ENCODE measurements at regions of chr7 and their contacts with region 1.

Region 1: DNA sequence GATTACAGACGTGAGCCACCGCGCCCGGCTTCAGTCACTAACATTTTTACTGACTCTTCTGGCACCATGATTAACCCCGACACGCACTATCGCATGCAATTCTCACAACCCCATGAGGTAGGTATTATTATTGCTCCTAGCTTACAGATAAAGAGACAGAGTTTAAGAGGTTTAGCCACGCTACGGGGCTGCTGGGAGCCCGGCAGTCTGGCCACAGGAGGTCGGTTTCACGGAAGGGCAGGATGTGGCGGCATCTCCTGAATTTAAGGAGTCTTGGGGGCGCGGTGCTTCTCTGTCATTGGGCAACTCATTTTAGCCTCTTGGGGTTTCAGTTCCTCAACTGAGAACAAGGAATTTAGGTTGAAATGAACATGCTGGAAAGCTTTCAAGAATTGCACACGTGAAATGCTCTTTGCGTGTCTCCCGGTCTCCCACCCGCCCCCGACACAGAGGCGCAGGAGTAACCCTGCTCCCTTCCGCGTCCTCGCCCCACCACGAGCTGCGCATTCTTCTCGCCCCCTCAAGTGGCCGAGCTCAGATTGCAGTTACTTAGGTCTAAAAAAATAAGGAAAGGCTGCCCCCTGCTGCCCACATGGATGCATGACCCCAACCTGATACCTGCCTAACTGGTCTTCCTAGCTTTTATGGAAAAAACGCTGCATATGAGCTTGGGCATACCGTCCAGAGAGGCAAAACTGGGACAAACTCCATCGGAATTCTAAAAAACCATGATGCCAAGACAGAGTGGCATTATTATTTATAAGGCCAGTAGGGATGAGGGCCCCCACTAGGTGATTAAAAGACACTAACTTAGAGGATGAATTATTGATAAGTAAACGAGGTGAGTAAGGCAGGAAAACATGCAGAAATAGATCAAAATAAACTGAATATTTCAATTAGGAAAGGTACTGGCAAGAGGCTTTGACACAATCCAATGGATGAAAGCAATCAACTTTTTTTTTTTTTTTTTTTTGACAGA is 12.4 kb downstream of the PRSS2 start:
- DNase-seq: peak; percentile 96
- H3K4me3 ChIP-seq: peak overlapping the region; percentile 59
- H3K27ac ChIP-seq: peak overlapping the region; percentile 31
- H3K4me1 ChIP-seq: peaks cover 56% of the 10 kb centered on the region
- CTCF ChIP-seq: peak; percentile 99

Region 2: DNA sequence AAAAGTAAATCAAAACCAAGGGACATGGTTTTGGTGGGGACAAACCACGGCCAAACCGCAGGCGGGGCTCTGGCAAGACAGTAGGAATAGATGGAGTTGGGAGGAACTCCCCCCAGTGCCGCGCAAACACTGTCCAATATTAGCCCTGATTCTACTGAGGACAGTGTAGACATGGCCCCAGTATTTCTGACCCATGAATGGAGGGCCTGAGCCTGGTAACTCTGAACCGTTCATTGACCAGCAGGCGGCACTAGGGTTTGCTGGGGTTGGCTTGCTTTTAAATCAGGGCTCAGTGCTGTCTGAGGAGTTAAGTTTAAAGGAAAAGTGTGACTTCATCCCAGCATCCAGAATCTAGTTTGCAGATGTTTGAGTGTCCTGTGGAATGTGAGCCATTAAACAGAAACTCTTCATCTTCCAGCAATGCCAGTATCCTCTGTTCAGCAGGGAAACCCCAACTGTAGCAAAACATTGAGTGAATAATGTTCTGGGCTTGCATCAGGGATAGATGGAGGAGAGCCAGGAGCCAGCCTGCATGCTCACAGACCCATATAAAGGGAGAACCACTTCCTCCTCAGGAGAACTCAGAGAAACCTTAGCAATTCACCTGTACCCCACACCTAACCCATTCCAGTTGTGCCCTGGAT is 378.0 kb before region 1 on chr7:
- CTCF ChIA-PET with region 1: no interaction called
- POLR2A ChIA-PET with region 1: no interaction called
- intact Hi-C with region 1: no loop called
- DNase-seq: no peak
- H3K4me3 ChIP-seq: no peak overlapping the region
- H3K27ac ChIP-seq: no peak overlapping the region
- H3K4me1 ChIP-seq: no peaks in the 10 kb centered on the region
- CTCF ChIP-seq: no peak

Region 3: DNA sequence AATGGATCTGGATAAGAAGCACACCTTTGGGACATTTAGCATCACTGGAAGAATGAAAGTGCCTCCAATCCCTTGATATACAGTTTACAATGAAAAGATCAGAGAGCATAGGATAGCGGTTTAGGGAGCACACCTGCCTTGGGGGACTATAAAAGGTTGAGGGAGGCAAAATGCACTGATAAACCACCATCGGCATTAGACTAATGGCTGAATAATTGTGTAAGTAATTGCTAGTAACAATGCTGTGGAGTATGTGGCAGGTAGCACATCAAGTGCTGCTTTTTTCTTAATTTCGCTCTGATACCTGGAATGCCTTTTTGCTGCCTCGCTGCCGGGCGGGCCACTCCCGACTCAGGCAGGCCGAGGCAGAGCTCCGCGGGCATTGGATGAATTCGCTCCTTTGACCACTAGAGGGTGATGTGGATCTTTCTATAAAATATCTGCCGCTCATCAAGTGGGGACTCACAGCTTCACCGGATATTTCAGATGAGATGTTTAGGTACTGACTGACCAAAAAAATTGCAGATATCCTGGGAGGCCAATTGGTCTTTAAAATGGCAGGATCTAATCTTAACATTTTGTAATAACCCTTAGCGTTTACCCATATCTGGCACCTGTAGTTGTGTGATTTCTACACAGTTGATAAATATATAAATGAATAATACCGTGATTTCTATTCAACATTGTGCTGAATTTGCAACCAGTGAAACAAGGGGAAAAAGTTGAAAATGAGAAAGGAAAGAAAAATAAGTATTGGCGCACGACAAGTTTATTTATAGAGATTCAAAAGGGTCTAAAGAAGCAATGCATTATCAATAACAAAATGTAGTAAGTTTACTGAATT is 150.7 kb before region 1 on chr7:
- CTCF ChIA-PET with region 1: interaction called, 3 read pairs
- POLR2A ChIA-PET with region 1: interaction called, 3 read pairs
- intact Hi-C with region 1: loop called (anchors 1 kb)
- DNase-seq: peak; percentile 82
- H3K4me3 ChIP-seq: no peak overlapping the region
- H3K27ac ChIP-seq: no peak overlapping the region
- H3K4me1 ChIP-seq: no peaks in the 10 kb centered on the region
- CTCF ChIP-seq: peak; percentile 90

Region 4: GRCh38 chr7:142669074-142669654 is 114.0 kb before region 1 on chr7:
- CTCF ChIA-PET with region 1: interaction called, 4 read pairs
- POLR2A ChIA-PET with region 1: interaction called, 5 read pairs
- intact Hi-C with region 1: loop called (anchors 1 kb)
- DNase-seq: peak; percentile 48
- H3K4me3 ChIP-seq: no peak overlapping the region
- H3K27ac ChIP-seq: no peak overlapping the region
- H3K4me1 ChIP-seq: peaks cover 41% of the 10 kb centered on the region
- CTCF ChIP-seq: peak; percentile 88

Region 5: DNA sequence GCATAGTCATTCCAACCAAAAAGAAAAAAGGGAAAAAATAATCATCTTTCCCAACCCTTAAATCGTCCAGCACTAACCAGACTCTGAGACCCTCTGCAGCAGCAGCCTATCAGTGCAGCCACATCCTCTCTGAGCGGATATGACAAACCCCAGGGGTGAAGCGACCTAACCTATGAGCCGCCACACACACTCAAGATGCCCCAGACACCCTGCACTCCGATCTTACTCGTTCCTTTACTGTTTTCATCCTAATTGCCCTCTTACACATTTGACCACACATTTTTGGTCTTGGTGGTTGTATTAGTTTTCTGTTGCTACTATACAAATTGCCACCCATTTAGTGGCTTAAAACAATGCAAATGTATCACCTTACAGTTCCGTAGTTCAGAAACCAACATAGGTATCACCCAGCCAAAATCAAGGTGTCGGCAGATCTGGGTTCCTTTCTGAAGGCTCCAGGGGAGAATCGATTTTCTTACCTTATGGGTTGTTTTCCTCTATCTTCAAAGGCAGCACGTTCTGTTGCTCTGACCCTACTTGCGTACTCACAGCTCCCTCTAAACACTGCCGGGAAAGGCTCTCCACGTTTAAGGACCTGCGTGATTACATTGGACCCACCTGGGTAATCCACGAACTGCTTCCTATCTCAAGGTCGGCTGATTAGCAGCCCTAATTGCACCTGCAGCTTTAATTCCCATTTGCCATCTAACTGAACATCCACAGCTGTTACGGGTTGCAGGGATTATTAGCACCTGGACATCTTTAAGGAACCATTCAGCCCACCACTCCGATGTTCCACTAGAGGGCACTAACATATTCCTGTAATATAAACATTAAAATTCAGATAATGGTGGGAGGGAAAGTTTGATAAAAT is 71.2 kb before region 1 on chr7:
- CTCF ChIA-PET with region 1: interaction called, 41 read pairs
- POLR2A ChIA-PET with region 1: interaction called, 25 read pairs
- intact Hi-C with region 1: loop called (anchors 1 kb)
- DNase-seq: peak; percentile 74
- H3K4me3 ChIP-seq: peak overlapping the region; percentile 58
- H3K27ac ChIP-seq: no peak overlapping the region
- H3K4me1 ChIP-seq: peaks cover 46% of the 10 kb centered on the region
- CTCF ChIP-seq: peak; percentile 98

Region 6: DNA sequence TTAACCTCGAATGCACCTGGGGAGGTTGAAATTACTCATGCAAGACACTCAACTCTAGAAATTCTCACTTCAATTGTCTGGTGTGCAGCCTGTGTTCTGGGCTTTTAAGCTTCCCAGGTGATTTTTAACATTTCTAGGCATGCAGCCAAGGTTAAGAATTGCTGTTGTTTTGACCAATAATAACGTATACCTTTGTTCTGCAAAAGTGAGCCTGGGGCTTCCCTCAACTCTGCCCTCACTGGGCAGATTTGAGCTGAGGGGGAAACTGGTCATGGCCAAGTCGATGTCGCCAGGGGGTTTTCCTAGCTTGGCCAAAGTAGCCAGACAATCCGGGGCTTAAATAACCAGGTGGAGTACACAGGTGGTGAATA is 11.9 kb before region 1 on chr7:
- CTCF ChIA-PET with region 1: interaction called, 15 read pairs
- POLR2A ChIA-PET with region 1: interaction called, 8 read pairs
- intact Hi-C with region 1: no loop called
- DNase-seq: peak; percentile 91
- H3K4me3 ChIP-seq: peak overlapping the region; percentile 7
- H3K27ac ChIP-seq: peak overlapping the region; percentile 78
- H3K4me1 ChIP-seq: peaks cover 35% of the 10 kb centered on the region
- CTCF ChIP-seq: no peak